HepG2 (cell line): ENCODE measurements at regions of chr22 and their contacts with region 1.

Region 1: DNA sequence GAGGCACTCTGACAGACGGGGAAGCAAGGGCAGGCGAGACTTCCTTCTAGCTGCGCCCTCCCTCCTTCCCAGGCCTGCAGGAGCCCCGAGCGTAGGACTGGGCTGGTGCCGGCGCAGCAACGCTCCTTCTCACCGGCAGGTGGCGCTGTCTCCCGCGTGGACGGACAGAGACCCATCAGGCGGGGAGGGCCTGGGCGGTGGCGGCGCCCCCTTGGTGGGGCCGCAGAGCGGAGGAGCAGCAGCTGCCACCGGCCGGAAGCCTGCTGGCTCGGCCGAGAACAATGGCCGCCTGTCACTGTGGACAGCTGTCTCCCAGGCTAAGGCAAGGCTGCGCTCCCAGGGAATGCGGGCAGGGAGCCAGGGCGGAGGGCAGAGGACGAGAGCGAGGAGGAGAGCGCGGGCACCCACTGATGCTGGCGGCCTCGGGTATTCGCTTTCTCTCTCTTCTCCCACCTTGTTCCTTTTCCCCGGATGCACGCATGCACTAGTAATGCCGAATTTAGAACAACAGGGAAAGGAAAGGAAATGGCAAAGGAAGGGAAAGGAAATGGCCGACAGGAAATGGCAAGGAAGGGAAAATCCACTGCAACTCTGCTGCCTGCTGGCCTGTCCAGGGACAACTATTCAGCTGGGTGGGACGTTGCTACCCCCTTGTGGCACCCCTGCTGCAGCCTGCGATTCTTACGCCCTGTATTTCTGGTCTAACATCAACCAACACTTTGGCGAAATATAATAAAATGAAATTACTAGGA is 14.4 kb downstream of the PPM1F start:
- DNase-seq: peak; percentile 83
- ATAC-seq: peak; percentile 96
- H3K4me3 ChIP-seq: peak overlapping the region; percentile 56 to 78 (median 72)
- H3K27ac ChIP-seq: peak overlapping the region; percentile 83
- H3K4me1 ChIP-seq: peaks cover 18% of the 10 kb centered on the region
- H3K27me3 ChIP-seq: no peaks in the 10 kb centered on the region
- CTCF ChIP-seq: peak; percentile 99
- EP300 ChIP-seq: no peak
- POLR2A ChIP-seq: peak; percentile 57 to 73; a peak in 3 of 4 replicates
- RAD21 ChIP-seq: peak; percentile 85

Region 2: GRCh38 chr22:21778705-21779363 is 159.4 kb before region 1 on chr22:
- CTCF ChIA-PET with region 1: interaction called, 3 read pairs
- POLR2A ChIA-PET with region 1: no interaction called
- in situ Hi-C with region 1: no loop called
- intact Hi-C with region 1: loop called (anchors 1 kb)
- DNase-seq: no peak
- ATAC-seq: no peak; the same call in 2 of the 3 replicates
- H3K4me3 ChIP-seq: no peak overlapping the region
- H3K27ac ChIP-seq: no peak overlapping the region
- H3K4me1 ChIP-seq: no peaks in the 10 kb centered on the region
- H3K27me3 ChIP-seq: no peaks in the 10 kb centered on the region
- CTCF ChIP-seq: no peak
- EP300 ChIP-seq: no peak
- POLR2A ChIP-seq: no peak
- RAD21 ChIP-seq: no peak

Region 3: DNA sequence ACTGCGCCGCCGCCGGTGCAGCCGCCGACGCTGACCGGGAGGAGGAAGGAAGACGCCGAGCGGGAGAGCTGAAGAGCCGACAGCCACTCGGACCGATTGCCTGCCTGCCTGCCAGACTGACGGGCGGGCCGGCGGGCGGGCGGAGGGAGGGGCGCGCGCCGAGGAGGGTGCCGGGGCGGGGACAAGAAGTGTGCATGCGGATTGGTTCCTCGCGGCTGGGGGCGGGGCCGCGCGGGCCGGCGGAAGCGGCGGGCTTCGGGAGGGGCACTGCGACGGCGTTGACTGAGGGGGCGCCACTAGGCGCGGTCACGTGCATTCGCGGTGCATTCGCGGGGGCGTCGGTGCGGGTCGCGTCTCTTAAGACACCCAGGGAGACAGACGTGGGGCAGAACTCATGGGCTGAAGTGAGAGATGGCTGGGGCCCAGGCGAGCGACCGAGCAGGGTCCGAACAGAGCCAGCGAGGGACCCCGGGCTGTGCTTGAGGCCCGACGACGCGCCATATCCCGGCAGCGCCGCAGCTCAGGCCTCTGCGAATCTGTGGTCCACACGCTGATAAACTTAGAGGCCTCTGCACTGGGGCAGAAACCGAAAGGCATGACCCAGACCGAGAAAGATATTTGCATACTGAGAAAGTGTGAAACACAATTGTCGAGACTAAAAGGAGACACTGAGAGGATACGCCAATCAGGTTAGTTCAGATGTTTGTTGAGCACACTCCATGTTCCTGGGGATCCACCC is 70.5 kb before region 1 on chr22 and contains the start of gene MAPK1:
- CTCF ChIA-PET with region 1: no interaction called
- POLR2A ChIA-PET with region 1: no interaction called
- in situ Hi-C with region 1: no loop called
- intact Hi-C with region 1: loop called (anchors 5 kb)
- DNase-seq: peak; percentile 79
- ATAC-seq: peak; percentile 96
- H3K4me3 ChIP-seq: peak within 1 kb of the TSS; percentile 80 to 95 (median 88)
- H3K27ac ChIP-seq: peak within 1 kb of the TSS; percentile 82
- H3K4me1 ChIP-seq: peaks cover 37% of the 10 kb centered on the region
- H3K27me3 ChIP-seq: no peaks in the 10 kb centered on the region; a peak in 1 of 5 replicates
- CTCF ChIP-seq: peak; percentile 72
- EP300 ChIP-seq: 0 out of 4 replicates have a peak, but pooled peaks of 1 of the 2 experiments have one; percentile 3
- POLR2A ChIP-seq: peak; percentile 82 to 92
- RAD21 ChIP-seq: peak; percentile 52; the same call in 1 of the 2 replicates
- total RNA-seq, gene MAPK1: 107 and 154 TPM in 2 replicates

Region 4: DNA sequence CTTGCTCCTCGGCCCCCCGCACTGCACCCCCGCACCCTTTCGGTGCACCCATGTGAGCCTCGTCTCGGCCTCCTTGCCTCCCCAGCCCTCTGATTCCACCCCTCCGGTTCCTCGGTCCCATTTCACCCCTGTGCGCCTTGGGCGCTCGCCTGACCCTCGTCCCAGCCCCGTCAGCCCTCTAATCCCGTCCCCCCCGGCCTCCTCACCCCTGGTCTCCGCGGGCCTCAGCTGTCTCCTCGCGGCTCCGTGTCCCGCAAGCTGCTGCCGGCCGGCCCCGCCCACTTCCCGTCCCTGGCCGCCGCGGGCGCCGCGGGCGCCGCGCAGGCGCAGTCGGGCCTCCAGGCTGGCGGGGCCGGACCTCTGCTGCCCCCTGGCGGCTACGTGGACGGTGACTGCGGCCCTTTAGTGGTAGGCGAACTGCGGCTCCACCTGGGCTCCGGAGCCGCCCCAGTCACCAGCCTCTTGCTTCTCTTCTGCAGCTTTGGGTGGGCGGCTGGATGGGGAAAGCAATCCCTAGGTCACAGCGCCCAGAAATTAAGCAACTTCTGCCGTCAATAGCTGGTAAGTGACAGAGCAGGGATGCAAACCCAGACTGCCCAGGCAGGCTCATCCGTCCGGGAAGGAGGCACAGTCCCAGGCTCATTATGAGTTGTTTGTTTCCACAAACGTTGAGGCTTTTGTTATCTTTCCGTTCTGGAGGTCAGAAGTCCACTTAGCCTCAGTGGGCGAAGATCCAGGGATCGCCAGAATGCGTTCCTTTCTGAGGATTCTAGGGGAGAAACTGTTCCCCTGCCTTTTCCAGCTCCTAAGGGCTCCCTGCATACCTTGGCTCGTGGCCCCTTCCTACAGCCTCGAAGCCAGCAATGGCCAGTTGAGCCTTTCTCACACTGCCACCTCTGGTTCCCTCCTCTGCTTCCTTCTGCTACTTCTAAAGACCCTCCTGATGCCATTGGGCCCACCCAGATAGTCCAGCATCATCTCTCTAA is 14.6 kb after region 1 on chr22 and contains the start of gene PPM1F:
- CTCF ChIA-PET with region 1: interaction called, 25 read pairs
- POLR2A ChIA-PET with region 1: interaction called, 16 read pairs
- in situ Hi-C with region 1: no loop called
- intact Hi-C with region 1: loop called (anchors 2 kb)
- DNase-seq: peak; percentile 57
- ATAC-seq: peak; percentile 77
- H3K4me3 ChIP-seq: peak within 1 kb of the TSS; percentile 67 to 90 (median 86)
- H3K27ac ChIP-seq: no peak within 1 kb of the TSS
- H3K4me1 ChIP-seq: peaks cover 16% of the 10 kb centered on the region
- H3K27me3 ChIP-seq: no peaks in the 10 kb centered on the region; a peak in 1 of 5 replicates
- CTCF ChIP-seq: peak; percentile 85
- EP300 ChIP-seq: no peak
- POLR2A ChIP-seq: peak in 1 of 2 experiments; percentile 71; a peak in 2 of 4 replicates
- RAD21 ChIP-seq: peak; percentile 87
- total RNA-seq, gene PPM1F: 19.6 and 20.4 TPM in 2 replicates